ENCODE measurements at regions of chr17 and their contacts with region 1.

Region 1: GRCh38 chr17:37179893-37180292 is 195.9 kb upstream of the C17orf78 start:
- DNase-seq: no peak
- H3K4me3 Mint-ChIP-seq: no peak overlapping the region
- H3K27ac Mint-ChIP-seq: no peak overlapping the region
- H3K4me1 Mint-ChIP-seq: no peaks in the 10 kb centered on the region
- H3K27me3 Mint-ChIP-seq: no peaks in the 10 kb centered on the region

Region 2: GRCh38 chr17:36761203-36761950 is 418.5 kb before region 1 on chr17:
- CTCF ChIA-PET with region 1: no interaction called
- POLR2A ChIA-PET with region 1: no interaction called
- DNase-seq: no peak
- H3K4me3 Mint-ChIP-seq: no peak overlapping the region
- H3K27ac Mint-ChIP-seq: no peak overlapping the region
- H3K4me1 Mint-ChIP-seq: peaks cover 17% of the 10 kb centered on the region
- H3K27me3 Mint-ChIP-seq: no peaks in the 10 kb centered on the region

Region 3: GRCh38 chr17:37220607-37220953 is 40.7 kb after region 1 on chr17:
- CTCF ChIA-PET with region 1: no interaction called
- POLR2A ChIA-PET with region 1: interaction called, 10 read pairs
- DNase-seq: peak; percentile 45
- H3K4me3 Mint-ChIP-seq: no peak overlapping the region
- H3K27ac Mint-ChIP-seq: no peak overlapping the region
- H3K4me1 Mint-ChIP-seq: peaks cover 4% of the 10 kb centered on the region
- H3K27me3 Mint-ChIP-seq: no peaks in the 10 kb centered on the region

Measured in activated CD4-positive, alpha-beta T cell treated with anti-CD3 and anti-CD28 coated beads, Interleukin-2, amount 10 ng/mL, durations not matched to agents 7 days and 5 days (primary cell).